Activated naive CD4-positive, alpha-beta T cell treated with anti-CD3 and anti-CD28 coated beads, Interleukin-2, amount 10 ng/mL, durations not matched to agents 7 days and 5 days (primary cell): ENCODE measurements at regions of chr2 and their contacts with region 1.

Region 1: DNA sequence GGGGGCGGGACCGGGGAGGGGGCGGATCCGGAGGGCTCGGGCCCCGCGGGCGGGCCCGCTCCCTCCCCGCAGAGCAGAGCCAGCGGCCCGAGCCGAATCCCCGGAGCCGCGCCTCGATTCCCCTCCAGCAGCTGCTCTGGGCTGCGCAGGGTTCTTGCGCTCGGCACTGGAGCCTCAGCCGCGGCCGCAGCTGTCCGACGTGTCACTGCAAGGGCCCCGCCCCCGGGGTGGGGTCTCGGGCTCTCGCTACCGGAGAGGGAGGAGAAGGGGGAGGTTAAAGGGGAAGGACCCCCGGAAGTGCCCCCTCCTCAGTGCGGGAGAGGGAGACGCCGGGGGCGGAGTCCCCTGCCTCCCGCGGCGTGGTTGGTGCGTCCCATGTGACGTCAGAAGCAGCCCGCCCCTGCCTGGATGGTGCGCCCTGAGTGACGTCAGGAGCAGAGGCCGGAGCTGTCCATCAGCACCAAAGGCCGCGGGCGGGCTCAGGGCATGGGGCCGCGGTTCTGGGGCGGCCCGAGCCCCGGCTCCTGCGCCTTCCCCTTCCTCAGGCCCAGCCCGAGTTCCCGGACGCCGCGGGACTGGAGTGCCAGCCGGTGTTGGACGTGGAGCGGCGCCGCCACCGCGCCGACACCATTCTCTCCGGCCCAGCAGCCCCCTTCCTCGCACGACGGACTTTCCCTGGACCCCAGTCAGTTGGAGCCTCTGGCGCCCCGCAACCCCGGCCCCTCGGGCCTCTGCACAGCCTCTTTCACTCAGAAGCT is at the starts of genes CHPF and TMEM198:
- DNase-seq: peak; percentile 97
- H3K4me3 Mint-ChIP-seq: peak within 1 kb of the TSS; percentile 77
- H3K27ac Mint-ChIP-seq: peak within 1 kb of the TSS; percentile 86
- H3K4me1 Mint-ChIP-seq: peaks cover 23% of the 10 kb centered on the region
- H3K27me3 Mint-ChIP-seq: peaks cover 36% of the 10 kb centered on the region

Region 2: GRCh38 chr2:218607436-218608115 is 936.2 kb before region 1 on chr2 and contains the start of gene PLCD4:
- CTCF ChIA-PET with region 1: no interaction called
- DNase-seq: no peak
- H3K4me3 Mint-ChIP-seq: no peak within 1 kb of the TSS
- H3K27ac Mint-ChIP-seq: no peak within 1 kb of the TSS
- H3K4me1 Mint-ChIP-seq: no peaks in the 10 kb centered on the region
- H3K27me3 Mint-ChIP-seq: peaks cover 44% of the 10 kb centered on the region

Region 3: DNA sequence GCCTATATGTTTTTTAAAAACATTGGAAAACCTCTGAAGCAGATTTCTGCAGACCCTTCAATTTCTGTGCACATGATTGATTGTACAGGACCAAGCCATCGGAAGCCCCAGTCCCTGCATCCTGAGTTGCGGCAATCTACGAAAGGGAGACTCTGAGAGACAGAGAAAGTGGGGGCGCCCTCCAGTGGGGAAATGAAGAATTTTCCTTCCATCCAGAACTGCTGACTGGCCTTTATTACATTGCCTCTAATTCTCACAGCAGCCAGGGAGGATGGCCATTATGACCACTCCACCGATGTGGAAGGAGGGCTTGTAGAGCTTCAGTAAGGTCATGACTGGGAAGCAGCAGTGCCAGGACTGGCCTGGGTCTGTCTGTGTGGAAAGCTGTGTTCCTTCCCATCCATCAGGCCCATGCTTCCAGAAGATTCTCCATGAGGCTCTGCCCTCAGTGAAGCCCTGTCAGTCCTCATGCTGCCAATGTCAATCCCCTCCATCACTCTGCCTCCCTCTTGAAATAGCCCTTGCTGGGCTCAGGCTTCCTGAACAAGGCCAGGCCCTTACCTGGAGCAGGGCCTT is 191.2 kb before region 1 on chr2:
- CTCF ChIA-PET with region 1: no interaction called
- DNase-seq: peak; percentile 81
- H3K4me3 Mint-ChIP-seq: no peak overlapping the region
- H3K27ac Mint-ChIP-seq: no peak overlapping the region
- H3K4me1 Mint-ChIP-seq: no peaks in the 10 kb centered on the region
- H3K27me3 Mint-ChIP-seq: peaks cover 61% of the 10 kb centered on the region

Region 4: DNA sequence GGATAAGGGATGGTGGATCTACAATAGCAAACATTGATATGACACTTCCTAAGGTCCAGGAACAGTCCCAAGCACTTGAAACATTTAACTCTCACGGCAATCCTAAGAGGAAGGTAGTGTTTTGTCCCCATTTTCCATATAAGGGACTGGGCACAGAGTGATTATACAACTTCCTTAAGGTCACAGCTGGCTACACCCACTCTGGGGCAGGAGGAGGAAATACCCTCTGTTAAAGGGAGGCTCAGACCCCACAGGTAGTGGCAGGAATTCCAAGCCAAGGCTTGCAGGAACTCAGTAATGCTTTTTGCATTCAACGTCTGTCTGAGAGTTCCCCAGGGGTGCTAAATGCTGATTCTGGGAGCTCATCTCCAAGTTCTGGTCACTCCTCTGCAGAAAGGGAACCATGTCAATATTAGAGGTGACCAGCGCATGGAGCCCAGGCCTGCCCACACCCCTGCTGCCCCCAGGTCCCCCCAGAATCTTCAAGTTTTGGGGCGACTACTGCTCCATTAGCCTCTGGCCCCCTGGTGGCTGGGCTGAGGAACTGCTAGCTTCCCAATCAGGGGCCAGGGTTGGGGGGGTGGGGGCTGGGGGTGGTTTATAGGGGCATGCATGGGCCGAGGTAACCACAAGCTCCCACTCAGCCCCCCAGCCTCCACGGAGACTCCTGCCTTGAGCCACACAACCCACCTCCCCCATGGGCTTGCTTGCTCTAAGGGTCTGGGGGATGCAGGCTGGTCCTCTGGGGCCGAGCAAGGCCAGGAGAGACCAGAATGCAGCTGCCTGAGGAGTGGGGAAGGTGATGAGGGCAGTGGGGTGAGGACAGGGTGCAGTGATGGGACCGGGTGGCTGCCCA is 16.5 kb after region 1 on chr2:
- CTCF ChIA-PET with region 1: interaction called, 35 read pairs
- DNase-seq: peak; percentile 32
- H3K4me3 Mint-ChIP-seq: no peak overlapping the region
- H3K27ac Mint-ChIP-seq: no peak overlapping the region
- H3K4me1 Mint-ChIP-seq: no peaks in the 10 kb centered on the region
- H3K27me3 Mint-ChIP-seq: peaks cover 21% of the 10 kb centered on the region

Region 5: GRCh38 chr2:219597552-219598307 is 54.0 kb after region 1 on chr2 and contains the start of gene STK11IP:
- CTCF ChIA-PET with region 1: interaction called, 11 read pairs
- DNase-seq: peak; percentile 96
- H3K4me3 Mint-ChIP-seq: peak within 1 kb of the TSS; percentile 90
- H3K27ac Mint-ChIP-seq: peak within 1 kb of the TSS; percentile 91
- H3K4me1 Mint-ChIP-seq: peaks cover 29% of the 10 kb centered on the region
- H3K27me3 Mint-ChIP-seq: peaks cover 20% of the 10 kb centered on the region

Region 6: DNA sequence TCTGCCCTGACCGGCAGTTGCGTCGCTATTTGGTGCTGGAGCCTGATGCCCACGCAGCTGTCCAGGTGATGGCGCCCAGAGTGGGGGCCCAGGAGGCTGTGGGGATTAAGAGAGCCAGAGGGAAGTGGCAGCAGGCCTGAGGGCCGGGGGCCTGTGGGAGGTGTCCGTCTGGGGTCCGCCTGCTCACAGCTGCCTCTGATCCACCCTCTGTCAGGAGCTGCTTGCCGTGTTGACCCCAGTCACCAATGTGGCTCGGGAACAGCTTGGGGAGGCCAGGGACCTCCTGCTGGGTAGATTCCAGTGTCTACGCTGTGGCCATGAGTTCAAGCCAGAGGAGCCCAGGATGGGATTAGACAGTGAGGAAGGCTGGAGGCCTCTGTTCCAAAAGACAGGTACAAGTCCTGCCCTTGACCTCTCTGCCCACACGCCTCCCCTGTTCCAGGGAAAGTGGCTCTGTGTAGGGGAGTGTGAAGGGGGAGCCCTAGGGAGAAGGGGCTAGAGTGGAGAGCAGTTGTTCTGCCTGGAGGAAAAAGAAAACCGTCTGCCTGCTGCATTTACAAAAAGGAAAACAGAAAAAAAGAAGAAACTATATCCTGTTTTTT is 65.5 kb after region 1 on chr2:
- CTCF ChIA-PET with region 1: no interaction called
- DNase-seq: no peak
- H3K4me3 Mint-ChIP-seq: no peak overlapping the region
- H3K27ac Mint-ChIP-seq: no peak overlapping the region
- H3K4me1 Mint-ChIP-seq: peaks cover 11% of the 10 kb centered on the region
- H3K27me3 Mint-ChIP-seq: no peaks in the 10 kb centered on the region

Region 7: GRCh38 chr2:219627103-219628100 is 83.6 kb after region 1 on chr2 and contains the start of gene SLC4A3:
- CTCF ChIA-PET with region 1: no interaction called
- DNase-seq: peak; percentile 29
- H3K4me3 Mint-ChIP-seq: peak within 1 kb of the TSS; percentile 66
- H3K27ac Mint-ChIP-seq: no peak within 1 kb of the TSS
- H3K4me1 Mint-ChIP-seq: peaks cover 5% of the 10 kb centered on the region
- H3K27me3 Mint-ChIP-seq: peaks cover 71% of the 10 kb centered on the region

Region 8: DNA sequence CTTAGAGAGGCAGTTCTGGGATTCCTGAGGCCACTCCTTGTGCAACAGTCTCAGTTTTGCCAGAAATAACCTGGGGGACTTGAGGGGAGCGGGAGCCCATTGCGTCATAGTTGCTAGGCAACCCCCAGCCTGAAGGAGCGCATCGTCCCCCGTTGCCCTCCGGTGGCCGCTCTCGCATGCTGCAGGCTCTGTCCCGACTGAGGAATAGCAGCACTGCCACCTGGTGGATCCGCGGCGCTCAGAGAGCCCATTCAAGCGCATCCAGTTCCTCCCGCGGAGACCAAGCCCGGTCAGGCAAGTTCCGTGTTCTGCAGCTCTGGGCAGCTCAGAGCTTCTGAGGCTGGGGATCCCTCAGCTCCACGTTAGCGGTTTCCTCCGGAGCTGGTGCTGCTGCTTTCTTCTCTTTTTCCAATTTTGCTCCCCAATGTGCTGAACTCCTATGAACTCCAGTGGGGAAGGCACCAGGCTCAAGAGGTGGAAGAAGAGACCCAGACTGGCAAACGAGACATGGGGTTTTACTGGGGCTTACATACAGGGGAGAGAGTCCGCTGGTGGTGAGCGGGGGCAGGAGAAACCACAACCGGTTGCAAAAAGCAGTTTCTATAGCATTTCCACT is 98.8 kb after region 1 on chr2:
- CTCF ChIA-PET with region 1: interaction called, 72 read pairs
- DNase-seq: peak; percentile 95
- H3K4me3 Mint-ChIP-seq: no peak overlapping the region
- H3K27ac Mint-ChIP-seq: no peak overlapping the region
- H3K4me1 Mint-ChIP-seq: peaks cover 3% of the 10 kb centered on the region
- H3K27me3 Mint-ChIP-seq: peaks cover 35% of the 10 kb centered on the region

Region 9: DNA sequence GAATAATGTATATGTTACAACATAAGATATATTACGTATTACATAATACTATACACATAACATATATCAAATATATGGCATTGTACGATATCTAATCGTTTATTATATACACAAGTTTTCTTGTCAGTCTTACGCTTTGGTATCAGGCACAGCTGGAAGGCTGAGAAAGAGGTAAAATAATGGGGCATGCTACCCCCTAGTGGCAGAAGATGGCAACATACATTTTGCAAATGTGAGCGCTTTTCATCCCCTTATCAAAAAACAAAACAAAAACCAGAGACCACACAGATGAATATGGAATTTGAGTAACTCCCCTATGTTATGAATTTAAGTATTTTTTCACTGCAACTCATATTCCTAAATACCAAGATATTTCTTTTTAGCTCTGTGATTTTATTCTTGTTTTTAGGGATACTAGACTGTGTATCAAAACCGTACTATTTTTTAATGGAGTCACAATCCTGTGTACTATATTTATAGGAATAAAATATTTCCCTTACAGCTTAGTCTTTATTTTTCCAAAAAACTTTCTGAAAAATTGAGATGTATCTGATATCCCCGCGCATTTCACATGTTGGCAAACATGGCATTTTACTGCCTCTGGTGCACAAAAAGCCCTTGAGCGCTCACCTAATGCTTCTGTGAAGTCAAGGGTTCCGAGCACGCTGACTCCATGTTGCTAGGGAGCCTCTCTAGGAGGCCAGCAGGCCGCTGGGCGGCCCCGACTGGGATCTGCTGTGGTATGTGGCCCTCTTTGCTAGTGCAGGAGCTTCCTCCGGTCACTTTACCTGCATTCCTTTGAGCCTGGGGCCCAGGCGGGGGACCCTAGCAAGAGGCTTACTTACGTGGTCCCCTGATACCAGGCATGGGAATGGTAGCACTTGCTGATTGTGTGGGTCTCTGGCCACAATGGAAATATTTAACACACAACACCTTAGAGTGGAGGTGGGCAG is 146.2 kb after region 1 on chr2:
- CTCF ChIA-PET with region 1: interaction called, 30 read pairs
- DNase-seq: peak; percentile 55
- H3K4me3 Mint-ChIP-seq: no peak overlapping the region
- H3K27ac Mint-ChIP-seq: no peak overlapping the region
- H3K4me1 Mint-ChIP-seq: peaks cover 9% of the 10 kb centered on the region
- H3K27me3 Mint-ChIP-seq: peaks cover 22% of the 10 kb centered on the region